Caco-2 (cell line): ENCODE measurements at regions of chr4 and their contacts with region 1.

Region 1: GRCh38 chr4:98467627-98468072 is 190.8 kb downstream of the TSPAN5 start:
- DNase-seq: peak; percentile 82 to 84
- H3K4me3 ChIP-seq: peak overlapping the region; percentile 42
- H3K4me3 Mint-ChIP-seq: peak overlapping the region; percentile 78
- H3K27ac Mint-ChIP-seq: peak overlapping the region; percentile 55
- H3K4me1 ChIP-seq: no peaks in the 10 kb centered on the region; the same call in 1 of the 2 replicates
- H3K4me1 Mint-ChIP-seq: no peaks in the 10 kb centered on the region
- H3K27me3 ChIP-seq: no peaks in the 10 kb centered on the region
- H3K27me3 Mint-ChIP-seq: no peaks in the 10 kb centered on the region
- CTCF ChIP-seq: peak; percentile 42 to 67

Region 2: GRCh38 chr4:98150092-98150761 is 317.4 kb before region 1 on chr4:
- CTCF ChIA-PET with region 1: no interaction called
- POLR2A ChIA-PET with region 1: no interaction called
- intact Hi-C with region 1: loop called (anchors 5 kb)
- DNase-seq: no peak
- H3K4me3 ChIP-seq: no peak overlapping the region
- H3K4me3 Mint-ChIP-seq: no peak overlapping the region
- H3K27ac Mint-ChIP-seq: no peak overlapping the region
- H3K4me1 ChIP-seq: no peaks in the 10 kb centered on the region
- H3K4me1 Mint-ChIP-seq: no peaks in the 10 kb centered on the region
- H3K27me3 ChIP-seq: no peaks in the 10 kb centered on the region
- H3K27me3 Mint-ChIP-seq: no peaks in the 10 kb centered on the region
- CTCF ChIP-seq: no peak

Region 3: DNA sequence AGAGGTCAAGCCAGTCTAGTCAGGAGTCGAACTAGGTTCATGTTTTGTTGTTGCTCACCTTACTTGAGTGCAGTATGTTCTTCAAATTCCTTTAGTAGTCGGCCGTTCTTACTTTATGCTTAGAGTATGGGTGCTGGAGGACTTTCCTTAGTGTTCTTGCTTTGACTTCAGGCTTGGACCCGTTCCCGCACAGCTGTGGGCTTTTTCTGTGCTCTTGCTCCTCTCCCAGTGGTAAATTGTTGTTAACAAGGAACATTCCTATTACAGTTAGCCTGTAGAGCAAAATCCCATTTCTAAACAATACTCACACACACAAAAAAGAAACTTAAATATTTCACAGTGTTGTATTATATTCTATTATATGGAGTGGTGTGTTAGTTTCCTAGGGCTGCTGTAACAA is 93.0 kb before region 1 on chr4:
- CTCF ChIA-PET with region 1: no interaction called
- POLR2A ChIA-PET with region 1: no interaction called
- intact Hi-C with region 1: no loop called
- DNase-seq: no peak
- H3K4me3 ChIP-seq: no peak overlapping the region
- H3K4me3 Mint-ChIP-seq: no peak overlapping the region
- H3K27ac Mint-ChIP-seq: no peak overlapping the region
- H3K4me1 ChIP-seq: no peaks in the 10 kb centered on the region
- H3K4me1 Mint-ChIP-seq: no peaks in the 10 kb centered on the region
- H3K27me3 ChIP-seq: no peaks in the 10 kb centered on the region
- H3K27me3 Mint-ChIP-seq: no peaks in the 10 kb centered on the region
- CTCF ChIP-seq: no peak

Region 4: DNA sequence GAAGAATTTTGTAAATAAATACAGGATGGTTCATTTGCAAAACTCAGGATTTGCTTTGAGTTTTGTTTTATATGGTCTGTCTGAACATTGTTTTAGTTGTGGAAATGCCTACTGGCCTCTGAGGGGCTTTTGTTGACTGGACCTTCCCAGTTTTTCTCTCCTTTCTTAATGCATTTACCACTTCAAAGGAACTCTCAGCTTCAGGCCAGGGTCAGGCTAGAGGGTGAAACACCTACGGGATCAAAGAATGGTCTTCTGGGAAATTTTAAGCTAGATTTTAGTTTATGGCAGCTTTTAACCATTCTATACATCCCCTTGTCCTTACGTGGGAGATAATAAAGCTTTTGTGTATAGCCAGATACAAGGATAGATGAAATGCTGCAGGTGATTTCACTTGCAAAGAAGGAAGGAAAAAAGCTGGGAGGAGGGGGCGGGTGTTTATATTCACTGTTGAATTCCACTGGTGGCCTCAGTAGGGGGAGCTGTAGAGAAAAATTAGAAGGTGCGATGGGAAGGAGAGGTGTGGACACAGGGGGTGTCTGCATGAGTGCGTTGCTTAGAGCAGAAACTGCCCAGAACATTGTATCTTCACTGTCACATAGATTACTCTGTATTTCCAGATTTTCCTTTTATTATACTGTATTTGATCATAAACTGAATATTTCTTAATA is 38.9 kb after region 1 on chr4:
- CTCF ChIA-PET with region 1: no interaction called
- POLR2A ChIA-PET with region 1: no interaction called
- intact Hi-C with region 1: no loop called
- DNase-seq: peak in 1 of 2 experiments; percentile 18
- H3K4me3 ChIP-seq: no peak overlapping the region
- H3K4me3 Mint-ChIP-seq: no peak overlapping the region
- H3K27ac Mint-ChIP-seq: no peak overlapping the region
- H3K4me1 ChIP-seq: no peaks in the 10 kb centered on the region; the same call in 1 of the 2 replicates
- H3K4me1 Mint-ChIP-seq: no peaks in the 10 kb centered on the region
- H3K27me3 ChIP-seq: no peaks in the 10 kb centered on the region
- H3K27me3 Mint-ChIP-seq: no peaks in the 10 kb centered on the region
- CTCF ChIP-seq: peak; percentile 14 to 27

Region 5: GRCh38 chr4:98584265-98584664 is 116.6 kb after region 1 on chr4:
- CTCF ChIA-PET with region 1: no interaction called
- POLR2A ChIA-PET with region 1: no interaction called
- intact Hi-C with region 1: no loop called
- DNase-seq: peak in 1 of 2 experiments; percentile 53
- H3K4me3 ChIP-seq: no peak overlapping the region
- H3K4me3 Mint-ChIP-seq: no peak overlapping the region
- H3K27ac Mint-ChIP-seq: no peak overlapping the region
- H3K4me1 ChIP-seq: peaks cover 10% of the 10 kb centered on the region
- H3K4me1 Mint-ChIP-seq: peaks cover 25% of the 10 kb centered on the region
- H3K27me3 ChIP-seq: no peaks in the 10 kb centered on the region
- H3K27me3 Mint-ChIP-seq: no peaks in the 10 kb centered on the region
- CTCF ChIP-seq: no peak

Region 6: GRCh38 chr4:98658287-98659105 is 190.8 kb after region 1 on chr4 and contains the start of gene TSPAN5:
- CTCF ChIA-PET with region 1: interaction called, 6 read pairs
- POLR2A ChIA-PET with region 1: no interaction called
- intact Hi-C with region 1: loop called (anchors 5 kb)
- DNase-seq: peak; percentile 73 to 87
- H3K4me3 ChIP-seq: peak within 1 kb of the TSS; percentile 80
- H3K4me3 Mint-ChIP-seq: peak within 1 kb of the TSS; percentile 86
- H3K27ac Mint-ChIP-seq: peak within 1 kb of the TSS; percentile 60
- H3K4me1 ChIP-seq: peaks cover 44% of the 10 kb centered on the region
- H3K4me1 Mint-ChIP-seq: peaks cover 56% of the 10 kb centered on the region
- H3K27me3 ChIP-seq: no peaks in the 10 kb centered on the region
- H3K27me3 Mint-ChIP-seq: no peaks in the 10 kb centered on the region
- CTCF ChIP-seq: no peak
- total RNA-seq, gene TSPAN5: 24.1 and 26.1 TPM in 2 replicates

Region 7: DNA sequence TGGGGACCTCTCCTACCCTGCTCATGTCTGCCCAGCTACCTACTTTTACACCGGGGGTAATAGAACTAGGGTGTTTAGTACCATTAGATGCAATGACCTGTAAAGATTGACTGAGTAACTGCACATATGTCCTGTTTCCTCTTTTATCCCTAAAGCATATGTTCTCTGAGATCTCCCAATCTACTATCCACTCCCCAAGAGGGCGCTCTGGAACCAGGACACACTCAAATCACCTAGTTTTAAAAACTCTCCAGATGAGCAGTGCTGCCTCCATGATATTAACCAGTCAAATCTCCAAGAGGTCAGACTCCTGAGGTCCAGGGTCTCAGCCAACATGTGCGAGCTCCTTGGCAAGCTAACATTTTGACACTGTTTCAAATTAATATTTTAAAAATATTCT is 277.7 kb after region 1 on chr4:
- CTCF ChIA-PET with region 1: no interaction called
- POLR2A ChIA-PET with region 1: no interaction called
- intact Hi-C with region 1: loop called (anchors 5 kb)
- DNase-seq: peak; percentile 42 to 44
- H3K4me3 ChIP-seq: no peak overlapping the region
- H3K4me3 Mint-ChIP-seq: no peak overlapping the region
- H3K27ac Mint-ChIP-seq: peak overlapping the region; percentile 31
- H3K4me1 ChIP-seq: peaks cover 37% of the 10 kb centered on the region
- H3K4me1 Mint-ChIP-seq: peaks cover 22% of the 10 kb centered on the region
- H3K27me3 ChIP-seq: no peaks in the 10 kb centered on the region
- H3K27me3 Mint-ChIP-seq: no peaks in the 10 kb centered on the region
- CTCF ChIP-seq: peak; percentile 8 to 18

Region 8: GRCh38 chr4:98786866-98787265 is 319.2 kb after region 1 on chr4:
- CTCF ChIA-PET with region 1: no interaction called
- POLR2A ChIA-PET with region 1: no interaction called
- intact Hi-C with region 1: no loop called
- DNase-seq: peak in 1 of 2 experiments; percentile 27
- H3K4me3 ChIP-seq: no peak overlapping the region
- H3K4me3 Mint-ChIP-seq: no peak overlapping the region
- H3K27ac Mint-ChIP-seq: peak overlapping the region; percentile 20
- H3K4me1 ChIP-seq: peaks cover 5% of the 10 kb centered on the region
- H3K4me1 Mint-ChIP-seq: peaks cover 15% of the 10 kb centered on the region
- H3K27me3 ChIP-seq: no peaks in the 10 kb centered on the region
- H3K27me3 Mint-ChIP-seq: no peaks in the 10 kb centered on the region
- CTCF ChIP-seq: no peak

Region 9: DNA sequence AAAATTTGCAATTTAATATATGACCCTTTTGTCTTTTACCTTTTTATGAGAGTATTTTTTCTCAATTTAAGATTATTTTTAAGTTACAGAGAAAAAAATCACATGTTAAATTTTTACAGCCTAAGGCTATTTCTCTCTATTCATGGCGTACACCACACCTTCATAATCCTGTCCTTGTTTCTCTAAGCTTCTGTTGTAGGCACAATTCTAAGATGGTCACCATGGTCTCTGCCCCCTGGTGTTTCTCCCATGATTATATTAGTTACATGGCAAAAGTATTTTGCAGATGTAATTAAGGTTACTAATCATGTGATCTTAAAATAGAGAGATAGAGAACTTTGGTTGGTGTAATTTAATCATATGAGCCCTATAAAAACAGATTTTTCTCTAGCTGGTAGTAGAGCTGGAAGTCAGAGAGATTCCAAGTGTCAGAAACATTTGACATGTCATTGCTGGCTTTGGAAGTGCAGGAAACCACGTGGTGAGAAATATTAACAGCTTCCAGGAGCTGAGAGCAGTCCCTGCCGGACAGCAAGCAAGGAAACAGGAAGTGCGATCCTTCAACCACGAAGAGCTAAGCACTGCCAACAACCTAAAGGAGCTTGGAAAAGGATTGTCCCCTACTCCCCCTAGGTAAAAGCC is 371.4 kb after region 1 on chr4:
- CTCF ChIA-PET with region 1: interaction called, 11 read pairs
- POLR2A ChIA-PET with region 1: interaction called, 4 read pairs
- intact Hi-C with region 1: no loop called
- DNase-seq: peak; percentile 52 to 56
- H3K4me3 ChIP-seq: no peak overlapping the region
- H3K4me3 Mint-ChIP-seq: no peak overlapping the region
- H3K27ac Mint-ChIP-seq: no peak overlapping the region
- H3K4me1 ChIP-seq: peaks cover 19% of the 10 kb centered on the region
- H3K4me1 Mint-ChIP-seq: peaks cover 6% of the 10 kb centered on the region
- H3K27me3 ChIP-seq: no peaks in the 10 kb centered on the region
- H3K27me3 Mint-ChIP-seq: no peaks in the 10 kb centered on the region
- CTCF ChIP-seq: no peak

Region 10: DNA sequence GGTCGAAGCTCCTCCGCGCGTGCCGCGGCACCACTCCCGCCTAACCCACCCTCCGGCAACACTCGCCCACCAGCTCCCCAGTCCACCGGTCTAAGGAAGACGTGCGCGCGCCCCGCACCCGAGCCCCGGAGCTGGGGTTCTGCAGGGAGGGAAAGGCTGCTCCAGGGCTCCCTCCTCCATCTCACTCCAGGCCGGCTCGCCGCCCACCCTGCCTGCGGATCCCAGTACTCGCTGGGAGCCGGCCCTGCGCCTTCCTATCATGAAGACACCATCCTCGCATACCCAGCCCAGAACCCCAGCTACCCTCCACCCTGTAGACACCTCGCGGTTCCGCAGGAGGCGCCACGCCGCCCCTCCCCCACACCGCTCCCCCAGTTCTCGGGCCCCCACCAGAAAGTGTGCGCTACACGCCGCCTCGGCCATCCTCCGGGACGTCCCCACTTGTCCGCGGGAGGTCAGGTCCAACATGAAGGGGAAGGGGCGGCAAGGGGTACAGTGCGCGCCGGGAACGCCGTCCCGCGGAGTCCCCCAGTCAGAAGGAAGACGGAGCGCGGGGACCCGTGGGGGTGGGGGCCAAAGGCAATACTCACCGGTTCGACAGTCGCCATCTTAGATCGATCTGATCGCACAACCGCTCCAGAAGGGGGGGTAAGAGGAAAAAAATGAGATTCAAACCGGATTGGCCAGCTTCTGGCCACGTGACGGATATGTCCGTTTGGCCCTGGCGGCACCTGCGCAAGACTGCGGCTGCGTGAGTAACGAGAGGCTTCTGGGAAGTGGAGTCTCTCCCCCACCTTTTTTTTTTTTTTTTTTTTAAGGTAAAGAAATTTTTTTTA is 461.1 kb after region 1 on chr4 and contains the start of gene EIF4E:
- CTCF ChIA-PET with region 1: interaction called, 6 read pairs
- POLR2A ChIA-PET with region 1: no interaction called
- intact Hi-C with region 1: loop called (anchors 1 kb)
- DNase-seq: peak; percentile 97 to 99
- H3K4me3 ChIP-seq: peak within 1 kb of the TSS; percentile 95
- H3K4me3 Mint-ChIP-seq: peak within 1 kb of the TSS; percentile 81
- H3K27ac Mint-ChIP-seq: peak within 1 kb of the TSS; percentile 85
- H3K4me1 ChIP-seq: peaks cover 6% of the 10 kb centered on the region
- H3K4me1 Mint-ChIP-seq: peaks cover 7% of the 10 kb centered on the region
- H3K27me3 ChIP-seq: no peaks in the 10 kb centered on the region
- H3K27me3 Mint-ChIP-seq: no peaks in the 10 kb centered on the region
- CTCF ChIP-seq: peak in 1 of 2 experiments; percentile 10
- total RNA-seq, gene EIF4E: 140 and 151 TPM in 2 replicates

Region 11: DNA sequence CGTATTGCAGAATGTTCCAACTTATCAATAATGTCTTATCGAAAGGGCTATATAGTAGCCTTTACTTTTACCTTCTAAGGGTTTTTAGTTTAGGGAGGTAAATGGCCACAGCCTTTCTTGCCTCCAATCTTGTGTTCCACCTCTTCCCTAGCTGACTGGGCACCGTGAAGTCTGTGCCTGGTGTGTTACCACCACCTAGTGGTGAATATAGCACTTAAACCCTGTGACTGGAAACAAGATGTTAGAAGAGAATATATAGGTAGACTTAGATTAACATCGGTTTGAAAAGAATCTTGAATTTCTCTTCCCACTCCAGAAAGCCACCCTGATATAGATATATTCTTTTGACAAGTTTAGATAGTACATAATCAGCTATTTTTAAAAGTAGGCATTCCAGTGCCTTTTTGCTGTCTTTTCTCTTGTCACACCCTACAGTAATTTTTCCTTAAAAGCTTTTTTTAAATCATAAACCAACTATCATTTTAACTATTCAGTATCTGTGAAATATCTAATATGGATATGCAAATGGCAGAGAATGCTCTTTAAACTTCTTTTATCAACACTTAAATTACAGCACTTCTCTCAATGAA is 995.3 kb after region 1 on chr4:
- CTCF ChIA-PET with region 1: interaction called, 3 read pairs
- POLR2A ChIA-PET with region 1: no interaction called
- intact Hi-C with region 1: loop called (anchors 2 kb)
- DNase-seq: peak; percentile 60 to 75
- H3K4me3 ChIP-seq: no peak overlapping the region
- H3K4me3 Mint-ChIP-seq: no peak overlapping the region
- H3K27ac Mint-ChIP-seq: no peak overlapping the region
- H3K4me1 ChIP-seq: peaks cover 8% of the 10 kb centered on the region; the same call in 1 of the 2 replicates
- H3K4me1 Mint-ChIP-seq: peaks cover 9% of the 10 kb centered on the region
- H3K27me3 ChIP-seq: no peaks in the 10 kb centered on the region
- H3K27me3 Mint-ChIP-seq: peaks cover 4% of the 10 kb centered on the region
- CTCF ChIP-seq: peak; percentile 72 to 85